Posterior vena cava (tissue), 2 donors: ENCODE measurements at regions of chr1 and their contacts with region 1.

Region 1: GRCh38 chr1:29033829-29034466 is 89.8 kb downstream of the TMEM200B start:
- DNase-seq: no peak

Region 2: DNA sequence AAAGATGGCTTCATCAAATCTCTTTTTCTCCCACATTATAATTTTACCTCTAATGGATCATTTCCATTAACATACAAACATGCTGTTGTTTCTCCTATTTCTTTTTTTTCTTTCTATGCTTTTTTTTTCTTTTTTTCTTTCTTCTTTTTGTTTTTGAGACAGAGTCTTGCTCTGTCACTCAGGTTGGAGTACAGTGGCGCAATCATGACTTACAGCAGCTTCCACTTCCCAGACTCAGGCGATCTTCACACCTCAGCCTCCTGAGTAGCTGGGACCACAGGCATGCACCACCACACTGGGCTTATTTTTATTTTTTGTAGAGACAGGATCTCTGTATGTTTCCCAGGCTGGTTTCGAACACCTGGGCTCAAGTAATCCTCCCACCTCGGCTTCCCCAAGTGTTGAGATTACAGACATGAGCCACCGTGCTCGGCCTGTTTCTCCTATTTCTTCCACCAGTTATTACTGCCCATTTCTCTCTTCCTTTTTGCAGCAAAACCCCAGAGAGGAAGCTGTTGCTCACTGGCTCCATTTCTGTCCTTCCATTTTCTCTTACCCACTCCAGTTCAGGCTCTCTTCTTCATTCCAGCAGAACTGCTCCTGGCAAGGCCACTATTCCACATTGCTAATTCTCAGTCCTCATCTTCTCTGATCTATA is 254.1 kb before region 1 on chr1:
- intact Hi-C with region 1: loop called in 1 of 2 experiments (anchors 10 kb)
- DNase-seq: peak; percentile 16

Region 3: DNA sequence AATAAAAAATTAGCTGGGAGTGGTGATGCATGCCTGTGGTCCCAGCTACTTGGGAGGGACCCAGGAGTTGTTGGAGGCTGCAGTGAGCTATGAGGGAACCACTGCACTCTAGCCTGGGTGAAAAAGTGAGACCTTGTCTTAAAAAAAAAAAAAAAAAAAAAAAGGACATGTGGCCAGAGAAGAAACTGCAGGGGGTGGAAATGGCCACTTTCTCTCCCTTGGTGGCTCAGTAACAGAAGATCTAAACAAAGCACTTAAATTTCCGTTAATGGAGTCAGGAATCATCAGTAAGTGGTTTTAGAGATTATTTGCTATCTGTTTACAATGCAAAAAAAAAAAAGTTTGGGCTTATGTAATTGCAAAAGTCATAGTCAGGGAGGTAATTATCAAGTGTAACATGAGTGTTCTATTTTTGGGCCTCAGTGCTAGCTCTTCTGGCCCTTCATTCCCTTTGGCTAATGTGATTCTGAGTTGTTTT is 241.3 kb before region 1 on chr1:
- intact Hi-C with region 1: loop called (anchors 10 kb)
- DNase-seq: no peak

Region 4: DNA sequence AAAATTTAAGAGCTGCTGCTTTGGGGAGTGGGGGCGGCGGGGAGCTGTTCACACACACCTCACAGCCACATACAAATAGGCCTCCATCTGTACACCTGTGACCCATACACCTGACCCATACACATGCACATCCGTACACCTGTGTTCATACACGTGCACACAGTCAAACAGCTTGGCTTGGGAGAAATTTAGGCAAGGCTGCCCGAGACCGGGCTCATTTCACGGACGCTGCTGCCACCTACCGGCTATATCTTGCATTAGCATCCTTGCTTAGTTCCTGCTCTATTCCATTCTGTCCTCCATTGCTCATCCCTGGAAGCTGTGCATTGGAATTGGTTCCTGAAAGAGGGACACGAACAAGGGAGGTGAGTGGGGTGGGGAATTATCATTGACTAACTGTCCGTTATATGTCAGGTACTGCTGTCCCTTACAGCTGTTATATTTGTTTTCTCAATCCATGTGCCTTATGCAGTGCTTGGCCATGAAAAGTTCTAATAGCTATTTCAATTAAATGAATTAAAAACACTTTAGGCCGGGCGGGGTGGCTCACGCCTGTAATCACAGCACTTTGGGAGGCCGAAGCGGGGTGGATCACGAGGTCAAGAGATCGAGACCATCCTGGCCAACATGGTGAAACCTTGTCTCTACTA is 156.7 kb before region 1 on chr1:
- intact Hi-C with region 1: loop called (anchors 2 to 5 kb)
- DNase-seq: peak; percentile 89

Region 5: DNA sequence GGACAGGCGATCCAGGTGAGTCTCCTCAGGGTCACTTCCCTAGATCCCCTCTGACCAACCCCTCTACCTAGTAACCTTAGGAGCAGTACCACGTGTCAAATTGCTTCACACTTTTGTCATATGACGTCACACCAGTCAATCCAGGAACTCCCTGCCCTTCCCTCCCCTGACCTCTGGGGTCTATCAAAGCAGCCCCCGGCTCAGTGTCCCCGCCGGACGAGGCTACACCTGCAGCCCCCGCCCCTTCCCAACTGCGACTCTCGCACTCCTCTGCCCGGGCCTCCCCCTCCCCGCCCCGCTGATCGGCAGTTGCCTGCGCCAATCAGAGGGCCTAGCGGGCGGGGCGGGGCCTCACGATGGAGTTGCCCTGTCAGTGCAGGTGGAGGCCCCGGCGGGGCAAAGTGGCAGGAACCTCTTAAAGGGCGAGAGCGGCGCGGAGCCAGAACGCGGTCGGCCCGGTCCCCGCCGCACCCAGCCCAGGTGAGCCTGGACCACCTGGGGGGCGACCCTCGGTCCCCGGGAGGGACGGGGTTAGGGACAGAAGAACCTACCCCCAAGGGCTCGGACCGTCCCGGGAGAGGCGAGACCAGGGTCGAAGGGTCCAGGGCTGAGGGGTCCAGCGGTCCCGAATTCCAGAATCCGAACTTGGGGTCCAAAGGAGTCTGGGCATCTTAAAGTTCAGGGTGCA is 147.1 kb before region 1 on chr1:
- intact Hi-C with region 1: loop called in 1 of 2 experiments (anchors 5 kb)
- DNase-seq: peak; percentile 92